PC-9 (cell line): ENCODE measurements at regions of chr7 and their contacts with region 1.

Region 1: GRCh38 chr7:74656837-74657691 is 454 bp upstream of the GTF2I start:
- DNase-seq: peak; percentile 86 to 99
- H3K4me3 ChIP-seq: peak overlapping the region; percentile 98
- H3K27ac ChIP-seq: peak overlapping the region; percentile 68
- H3K4me1 ChIP-seq: peaks cover 51% of the 10 kb centered on the region
- H3K27me3 ChIP-seq: no peaks in the 10 kb centered on the region
- CTCF ChIP-seq: peak; percentile 27; the same call in 1 of the 2 replicates

Region 2: GRCh38 chr7:74083117-74083876 is 573.8 kb before region 1 on chr7 and contains the start of gene LIMK1:
- CTCF ChIA-PET with region 1: no interaction called
- POLR2A ChIA-PET with region 1: no interaction called
- intact Hi-C with region 1: no loop called
- DNase-seq: peak in 1 of 2 experiments; percentile 89
- H3K4me3 ChIP-seq: peak within 1 kb of the TSS; percentile 97
- H3K27ac ChIP-seq: peak within 1 kb of the TSS; percentile 62
- H3K4me1 ChIP-seq: peaks cover 32% of the 10 kb centered on the region
- H3K27me3 ChIP-seq: no peaks in the 10 kb centered on the region
- CTCF ChIP-seq: no peak
- total RNA-seq, gene LIMK1: 128 and 148 TPM in 2 replicates

Region 3: DNA sequence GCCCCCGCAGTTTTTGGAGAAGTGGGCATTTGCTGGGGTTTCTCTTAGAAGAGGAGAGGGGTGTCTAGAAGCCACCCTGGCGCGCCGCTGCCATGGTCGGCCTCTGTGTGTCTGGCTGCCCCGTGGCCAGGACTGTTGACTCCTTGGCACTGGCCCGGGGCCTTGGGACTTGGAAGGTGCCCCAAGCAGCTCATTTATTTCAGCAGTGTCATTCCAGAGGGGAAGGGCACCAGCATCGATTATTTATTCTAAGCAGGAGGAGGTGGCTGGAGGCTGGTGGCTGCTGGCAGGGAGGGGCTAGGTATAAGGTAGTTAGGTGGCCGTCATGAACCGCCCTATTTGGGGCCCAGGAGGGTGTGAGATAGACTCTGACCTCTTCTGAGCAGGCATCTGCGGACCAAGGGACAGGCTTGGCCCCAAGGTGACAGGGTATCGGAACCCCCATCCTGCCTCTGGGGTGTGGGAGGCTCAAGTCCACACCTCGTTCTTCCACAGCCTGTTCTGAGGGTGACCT is 201.7 kb before region 1 on chr7:
- CTCF ChIA-PET with region 1: interaction called, 18 read pairs
- POLR2A ChIA-PET with region 1: no interaction called
- intact Hi-C with region 1: no loop called
- DNase-seq: no peak
- H3K4me3 ChIP-seq: peak overlapping the region; percentile 59; the same call in 1 of the 2 replicates
- H3K27ac ChIP-seq: no peak overlapping the region
- H3K4me1 ChIP-seq: peaks cover 7% of the 10 kb centered on the region
- H3K27me3 ChIP-seq: no peaks in the 10 kb centered on the region
- CTCF ChIP-seq: no peak

Region 4: DNA sequence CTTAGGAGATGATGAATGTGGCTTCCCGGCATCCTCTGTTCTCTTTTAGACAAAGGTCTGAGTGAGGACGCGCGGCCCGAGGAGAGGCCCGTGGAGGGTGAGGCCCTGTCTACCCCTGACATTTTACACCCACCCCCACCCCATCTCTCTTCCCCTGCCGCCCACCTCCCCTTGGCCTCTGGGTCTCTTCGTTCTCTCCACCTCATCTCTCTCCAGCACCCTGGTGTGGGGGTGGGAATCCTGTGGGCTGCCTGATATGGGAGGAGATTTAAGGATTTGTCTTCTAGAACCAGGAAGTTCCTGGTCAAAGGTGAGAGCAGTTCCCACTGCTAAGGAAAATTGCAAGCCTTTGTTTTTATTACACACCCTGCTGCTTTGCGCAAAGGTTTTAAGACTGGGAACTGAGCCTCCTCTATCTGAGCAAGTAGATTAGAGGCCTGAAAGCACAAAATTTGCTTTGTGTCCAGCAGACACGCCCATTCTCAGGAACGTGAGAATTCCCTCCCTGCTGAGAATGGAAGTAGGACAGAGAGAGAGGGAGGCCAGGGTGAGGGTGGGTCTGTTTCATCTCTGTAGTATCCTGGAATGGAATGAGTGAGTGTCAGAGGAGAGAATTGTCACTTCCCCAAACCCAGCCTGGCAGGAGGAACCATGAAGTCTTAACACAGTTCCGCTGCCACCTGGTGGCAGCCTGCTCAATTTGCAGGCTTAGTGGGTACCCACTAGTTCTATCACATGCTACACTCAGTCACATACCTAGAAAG is 112.2 kb before region 1 on chr7:
- CTCF ChIA-PET with region 1: no interaction called
- POLR2A ChIA-PET with region 1: interaction called, 45 read pairs
- intact Hi-C with region 1: no loop called
- DNase-seq: no peak
- H3K4me3 ChIP-seq: no peak overlapping the region
- H3K27ac ChIP-seq: no peak overlapping the region
- H3K4me1 ChIP-seq: no peaks in the 10 kb centered on the region
- H3K27me3 ChIP-seq: no peaks in the 10 kb centered on the region
- CTCF ChIP-seq: peak; percentile 66

Region 5: DNA sequence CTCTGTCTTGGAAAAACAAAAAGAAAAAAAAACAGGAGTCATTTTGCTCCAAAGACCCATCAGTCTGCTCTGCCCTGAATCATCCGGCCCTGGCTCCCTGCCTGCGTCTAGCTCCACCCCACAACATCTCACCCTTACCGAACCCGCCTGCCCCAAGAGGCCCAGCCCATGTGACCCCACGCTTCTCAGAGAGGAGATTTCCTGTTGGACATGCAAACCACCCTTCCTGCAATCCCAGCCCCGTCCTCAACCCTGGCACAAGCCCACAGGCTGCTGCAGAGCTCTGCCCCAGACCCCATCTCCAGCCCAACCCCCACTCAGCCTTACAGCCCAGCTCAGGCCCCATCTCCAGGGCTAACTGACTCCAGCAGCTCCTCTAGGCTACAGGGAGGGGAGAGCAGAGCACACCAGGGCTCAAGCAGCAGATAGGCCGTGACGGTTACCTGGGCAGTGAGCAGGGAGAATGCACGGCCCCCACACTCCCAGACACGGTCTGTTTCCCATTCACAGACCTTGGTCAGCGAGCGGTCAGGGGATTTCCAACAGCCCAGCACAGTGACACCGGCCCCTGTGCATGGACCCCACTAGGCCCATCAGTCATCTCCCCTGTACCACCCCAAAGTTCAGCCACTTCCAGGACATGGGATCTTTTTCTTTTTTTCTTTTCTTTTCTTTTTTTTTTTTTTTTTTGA is 69.5 kb before region 1 on chr7:
- CTCF ChIA-PET with region 1: interaction called, 4 read pairs
- POLR2A ChIA-PET with region 1: interaction called, 19 read pairs
- intact Hi-C with region 1: no loop called
- DNase-seq: peak; percentile 79 to 96
- H3K4me3 ChIP-seq: no peak overlapping the region
- H3K27ac ChIP-seq: peak overlapping the region; percentile 43
- H3K4me1 ChIP-seq: peaks cover 45% of the 10 kb centered on the region
- H3K27me3 ChIP-seq: no peaks in the 10 kb centered on the region
- CTCF ChIP-seq: no peak

Region 6: DNA sequence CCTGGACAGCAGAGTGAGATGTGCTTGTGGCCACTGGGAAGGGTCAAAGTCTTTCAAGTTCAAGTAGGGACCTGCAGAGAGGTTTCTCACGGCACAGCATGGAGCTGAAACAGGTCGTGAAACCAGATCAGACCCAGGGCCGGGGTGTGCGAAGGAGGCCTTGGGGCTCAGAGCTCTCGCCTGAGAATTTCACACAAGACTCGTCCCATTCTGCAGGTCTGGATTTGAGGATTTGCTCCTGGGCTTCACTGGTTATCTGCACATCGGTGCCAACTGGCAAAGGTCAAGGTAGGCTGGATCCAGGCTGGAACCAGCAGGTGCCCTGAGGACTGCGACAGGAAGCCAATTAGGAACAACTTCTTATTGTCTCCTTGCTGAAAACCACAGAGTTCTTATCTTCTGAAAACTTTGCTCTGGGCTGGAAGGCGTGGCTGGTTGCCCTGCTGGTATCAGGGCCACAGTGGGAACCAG is 23.6 kb before region 1 on chr7:
- CTCF ChIA-PET with region 1: no interaction called
- POLR2A ChIA-PET with region 1: interaction called, 19 read pairs
- intact Hi-C with region 1: loop called (anchors 1 kb)
- DNase-seq: peak; percentile 63
- H3K4me3 ChIP-seq: no peak overlapping the region
- H3K27ac ChIP-seq: peak overlapping the region; percentile 13; the same call in 1 of the 2 replicates
- H3K4me1 ChIP-seq: peaks cover 32% of the 10 kb centered on the region
- H3K27me3 ChIP-seq: no peaks in the 10 kb centered on the region
- CTCF ChIP-seq: no peak